MCF 10A (cell line): ENCODE measurements at regions of chr10 and their contacts with region 1.

Region 1: DNA sequence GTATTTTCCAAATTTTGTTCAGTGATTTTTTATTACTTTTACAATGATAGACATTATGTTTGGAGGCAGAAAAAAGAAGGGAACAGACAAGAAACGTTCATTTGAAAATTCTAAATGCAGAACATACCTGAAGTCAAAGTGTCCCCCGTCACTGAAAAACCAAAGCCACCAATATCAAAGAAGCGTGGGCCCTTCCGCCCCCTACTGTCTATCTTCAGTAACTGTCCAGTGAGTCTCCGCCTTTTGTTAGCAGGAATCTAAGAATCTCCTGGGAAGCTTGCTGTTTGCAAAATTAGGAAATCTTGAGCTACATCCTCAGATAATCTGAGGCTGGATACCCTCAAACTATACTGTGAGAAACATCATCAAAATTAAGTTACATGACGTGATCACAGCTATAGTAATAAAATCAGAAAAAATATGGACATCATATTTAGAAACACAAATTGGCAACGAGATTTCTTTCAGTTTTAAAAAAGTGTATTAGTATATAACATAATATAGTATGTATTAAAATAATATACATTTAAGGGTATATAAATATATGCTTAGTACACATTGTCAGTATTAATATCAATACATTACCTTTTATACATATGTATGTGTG is 169.3 kb upstream of the AKR1E2 start:
- DNase-seq: peak; percentile 76
- H3K4me3 Mint-ChIP-seq: no peak overlapping the region
- H3K27ac Mint-ChIP-seq: peak overlapping the region; percentile 35
- H3K4me1 Mint-ChIP-seq: peaks cover 12% of the 10 kb centered on the region
- H3K27me3 Mint-ChIP-seq: no peaks in the 10 kb centered on the region
- CTCF ChIP-seq: peak; percentile 90

Region 2: GRCh38 chr10:3197348-3198003 is 1459.2 kb before region 1 on chr10:
- CTCF ChIA-PET with region 1: interaction called, 4 read pairs
- POLR2A ChIA-PET with region 1: no interaction called
- intact Hi-C with region 1: loop called (anchors 5 kb)
- DNase-seq: peak; percentile 80
- H3K4me3 Mint-ChIP-seq: peak overlapping the region; percentile 69
- H3K27ac Mint-ChIP-seq: peak overlapping the region; percentile 61
- H3K4me1 Mint-ChIP-seq: peaks cover 16% of the 10 kb centered on the region
- H3K27me3 Mint-ChIP-seq: no peaks in the 10 kb centered on the region
- CTCF ChIP-seq: peak; percentile 79

Region 3: GRCh38 chr10:3239066-3239919 is 1417.4 kb before region 1 on chr10:
- CTCF ChIA-PET with region 1: interaction called, 4 read pairs
- POLR2A ChIA-PET with region 1: no interaction called
- intact Hi-C with region 1: loop called (anchors 5 kb)
- DNase-seq: peak; percentile 67
- H3K4me3 Mint-ChIP-seq: no peak overlapping the region
- H3K27ac Mint-ChIP-seq: peak overlapping the region; percentile 37
- H3K4me1 Mint-ChIP-seq: peaks cover 5% of the 10 kb centered on the region
- H3K27me3 Mint-ChIP-seq: no peaks in the 10 kb centered on the region
- CTCF ChIP-seq: peak; percentile 89

Region 4: GRCh38 chr10:4353964-4354363 is 302.7 kb before region 1 on chr10:
- CTCF ChIA-PET with region 1: interaction called, 6 read pairs
- POLR2A ChIA-PET with region 1: interaction called, 10 read pairs
- intact Hi-C with region 1: loop called (anchors 1 kb)
- DNase-seq: peak; percentile 73
- H3K4me3 Mint-ChIP-seq: peak overlapping the region; percentile 17
- H3K27ac Mint-ChIP-seq: peak overlapping the region; percentile 90
- H3K4me1 Mint-ChIP-seq: peaks cover 44% of the 10 kb centered on the region
- H3K27me3 Mint-ChIP-seq: no peaks in the 10 kb centered on the region
- CTCF ChIP-seq: no peak

Region 5: DNA sequence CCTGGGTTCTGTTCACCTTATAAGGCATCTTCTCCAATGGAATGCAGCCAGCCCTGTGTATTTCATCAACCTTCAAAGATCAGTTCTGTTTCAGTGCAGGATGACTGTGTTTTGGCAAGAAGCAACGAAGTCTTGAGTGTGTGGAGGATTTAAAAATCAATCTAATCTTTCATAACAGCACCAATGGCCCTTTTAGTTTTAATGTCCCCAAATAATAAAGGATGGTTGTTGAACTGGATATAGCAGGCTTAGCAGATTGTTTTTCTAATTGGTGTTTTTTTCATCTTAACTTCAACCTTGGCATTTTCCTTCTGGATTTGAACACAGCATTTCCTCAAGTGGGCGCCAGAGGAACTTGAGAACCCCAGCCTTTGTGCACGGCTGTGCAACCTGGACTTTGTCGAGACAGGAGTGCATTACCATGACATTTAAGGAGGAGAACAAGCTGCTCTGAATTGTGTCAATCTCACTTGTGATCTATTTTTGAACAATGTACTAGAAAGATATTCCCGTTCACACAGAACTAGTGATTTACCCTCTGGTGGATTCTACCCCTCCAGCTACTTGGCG is 143.9 kb before region 1 on chr10:
- CTCF ChIA-PET with region 1: interaction called, 4 read pairs
- POLR2A ChIA-PET with region 1: interaction called, 7 read pairs
- intact Hi-C with region 1: loop called (anchors 1 kb)
- DNase-seq: peak; percentile 78
- H3K4me3 Mint-ChIP-seq: no peak overlapping the region
- H3K27ac Mint-ChIP-seq: peak overlapping the region; percentile 76
- H3K4me1 Mint-ChIP-seq: peaks cover 9% of the 10 kb centered on the region
- H3K27me3 Mint-ChIP-seq: no peaks in the 10 kb centered on the region
- CTCF ChIP-seq: peak; percentile 52

Region 6: GRCh38 chr10:4671451-4672145 is 14.9 kb after region 1 on chr10:
- CTCF ChIA-PET with region 1: no interaction called
- POLR2A ChIA-PET with region 1: interaction called, 15 read pairs
- intact Hi-C with region 1: no loop called
- DNase-seq: peak; percentile 72
- H3K4me3 Mint-ChIP-seq: peak overlapping the region; percentile 56
- H3K27ac Mint-ChIP-seq: peak overlapping the region; percentile 90
- H3K4me1 Mint-ChIP-seq: peaks cover 27% of the 10 kb centered on the region
- H3K27me3 Mint-ChIP-seq: no peaks in the 10 kb centered on the region
- CTCF ChIP-seq: no peak